ENCODE measurements at regions of chr16 and their contacts with region 1.

Region 1: DNA sequence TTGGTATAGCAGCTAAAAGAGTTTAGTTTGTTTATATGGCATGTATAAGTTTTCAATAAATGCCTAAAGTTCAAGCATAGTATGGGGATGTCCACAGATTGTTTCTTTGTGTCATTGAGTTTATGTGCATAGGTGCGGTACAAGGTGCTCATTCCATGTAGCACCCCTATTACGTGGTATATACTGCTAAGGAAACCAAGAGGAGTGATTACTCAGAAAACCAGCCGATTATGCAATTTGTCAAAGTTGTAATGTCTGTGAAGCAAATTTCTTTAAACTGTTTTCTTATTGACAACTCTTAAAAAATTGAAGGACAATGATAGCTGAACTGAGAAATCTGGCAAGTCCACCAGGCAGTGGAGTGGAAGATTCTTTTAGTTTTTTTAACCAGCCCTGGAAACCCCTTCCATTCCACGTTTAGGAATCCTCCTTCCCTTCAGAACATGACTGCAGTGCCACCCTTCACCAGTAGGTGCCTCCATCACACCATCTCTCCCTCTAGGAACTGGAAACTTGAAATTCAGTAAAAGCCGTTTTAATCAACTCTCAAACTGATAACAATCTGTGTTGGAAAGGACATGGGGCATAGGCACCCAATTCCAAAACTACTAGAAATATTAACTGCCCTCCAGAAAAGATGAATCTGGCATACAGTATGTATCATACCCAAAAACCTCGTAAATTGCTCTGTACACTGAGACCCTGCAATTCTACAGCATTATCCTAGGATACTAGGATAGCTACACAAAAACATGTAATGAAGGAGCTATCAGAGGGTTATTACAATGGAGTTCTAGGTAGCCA is 43.5 kb downstream of the REXO5 start:
- DNase-seq: peak; percentile 60 to 68 (median 64)
- ATAC-seq: peak; percentile 76 to 84 (median 82)
- H3K4me3 ChIP-seq: no peak overlapping the region
- H3K27ac ChIP-seq: no peak overlapping the region
- H3K4me1 ChIP-seq: peaks cover 0 to 16% (median 7%) of the 10 kb centered on the region in 4 donors
- H3K27me3 ChIP-seq: no peaks in the 10 kb centered on the region
- CTCF ChIP-seq: peak; percentile 96 to 98 (median 97)
- POLR2A ChIP-seq: no peak

Region 2: DNA sequence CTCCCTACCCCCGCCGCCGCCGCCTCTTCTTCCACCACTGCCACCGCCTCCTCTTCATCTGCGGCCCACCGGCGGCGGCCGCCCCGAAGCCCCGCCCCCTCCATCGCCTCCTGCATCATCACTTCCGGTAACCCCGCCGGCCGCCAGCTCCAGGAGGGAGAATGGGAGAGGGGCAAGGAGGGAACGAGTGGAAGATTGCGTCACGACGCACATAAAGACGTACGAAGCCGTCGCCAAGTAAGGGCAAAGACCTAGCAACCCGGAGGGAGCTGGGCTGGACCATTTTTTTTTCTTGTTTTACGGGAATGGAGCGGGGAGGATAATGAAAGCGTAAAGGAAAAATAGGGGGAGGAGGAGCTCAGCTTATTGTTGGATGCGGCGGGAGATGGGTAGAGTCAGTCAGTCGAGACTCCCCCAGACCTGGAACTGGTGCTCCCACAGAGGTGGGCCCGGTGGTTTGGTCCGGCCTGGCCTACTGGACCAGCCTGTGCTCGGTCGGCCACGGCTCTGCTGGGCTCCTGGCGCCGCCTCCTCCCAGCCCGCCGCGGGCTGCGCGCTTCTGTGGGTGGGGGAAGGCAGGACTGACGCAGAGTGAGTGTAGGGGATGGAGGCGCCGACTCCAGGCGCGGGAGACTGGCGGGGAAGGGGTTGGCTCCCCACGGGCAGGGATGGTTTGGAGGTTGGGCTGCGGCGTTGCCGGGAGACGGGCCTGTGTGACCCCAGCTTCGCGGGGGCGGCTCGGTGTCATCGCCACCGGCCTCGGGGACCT is 50.7 kb after region 1 on chr16 and contains the starts of genes DCUN1D3 and LYRM1:
- intact Hi-C with region 1: loop called in 1 of 2 experiments (anchors 10 kb)
- DNase-seq: peak; percentile 96 to 97 (median 97)
- ATAC-seq: peak; percentile 75 to 90 (median 86)
- H3K4me3 ChIP-seq: peak within 1 kb of the TSS; percentile 81 to 89 (median 88)
- H3K27ac ChIP-seq: peak within 1 kb of the TSS; percentile 86 to 96 (median 92)
- H3K4me1 ChIP-seq: peaks cover 0 to 50% (median 14%) of the 10 kb centered on the region in 4 donors
- H3K27me3 ChIP-seq: no peaks in the 10 kb centered on the region
- CTCF ChIP-seq: no peak
- POLR2A ChIP-seq: peak; percentile 82
- total RNA-seq, gene DCUN1D3: 10.3 to 15.1 (median 13.8) TPM
- total RNA-seq, gene LYRM1: 32.4 to 102 (median 37.9) TPM

Region 3: GRCh38 chr16:20928774-20929411 is 79.1 kb after region 1 on chr16:
- intact Hi-C with region 1: no loop called
- DNase-seq: no peak
- ATAC-seq: no peak
- H3K4me3 ChIP-seq: no peak overlapping the region
- H3K27ac ChIP-seq: no peak overlapping the region
- H3K4me1 ChIP-seq: peaks cover 0 to 6% (median 2%) of the 10 kb centered on the region in 4 donors
- H3K27me3 ChIP-seq: no peaks in the 10 kb centered on the region
- CTCF ChIP-seq: no peak
- POLR2A ChIP-seq: no peak

Region 4: GRCh38 chr16:21083729-21084268 is 234.0 kb after region 1 on chr16:
- intact Hi-C with region 1: loop called in 1 of 2 experiments (anchors 10 kb)
- DNase-seq: peak; percentile 54 to 62 (median 60)
- ATAC-seq: peak; percentile 93 to 98 (median 94)
- H3K4me3 ChIP-seq: no peak overlapping the region
- H3K27ac ChIP-seq: no peak overlapping the region
- H3K4me1 ChIP-seq: no peaks in the 10 kb centered on the region
- H3K27me3 ChIP-seq: no peaks in the 10 kb centered on the region
- CTCF ChIP-seq: peak; percentile 70 to 78 (median 74)
- POLR2A ChIP-seq: no peak